Activated CD4-positive, alpha-beta memory T cell treated with anti-CD3 and anti-CD28 coated beads for 36 hours (primary cell): ENCODE measurements at regions of chr2 and their contacts with region 1.

Region 1: GRCh38 chr2:100554798-100555407 is 7.9 kb upstream of the PDCL3 start:
- DNase-seq: peak; percentile 75
- H3K4me3 Mint-ChIP-seq: peak overlapping the region; percentile 61
- H3K27ac Mint-ChIP-seq: peak overlapping the region; percentile 81
- H3K4me1 Mint-ChIP-seq: peaks cover 18% of the 10 kb centered on the region
- H3K27me3 Mint-ChIP-seq: no peaks in the 10 kb centered on the region

Region 2: DNA sequence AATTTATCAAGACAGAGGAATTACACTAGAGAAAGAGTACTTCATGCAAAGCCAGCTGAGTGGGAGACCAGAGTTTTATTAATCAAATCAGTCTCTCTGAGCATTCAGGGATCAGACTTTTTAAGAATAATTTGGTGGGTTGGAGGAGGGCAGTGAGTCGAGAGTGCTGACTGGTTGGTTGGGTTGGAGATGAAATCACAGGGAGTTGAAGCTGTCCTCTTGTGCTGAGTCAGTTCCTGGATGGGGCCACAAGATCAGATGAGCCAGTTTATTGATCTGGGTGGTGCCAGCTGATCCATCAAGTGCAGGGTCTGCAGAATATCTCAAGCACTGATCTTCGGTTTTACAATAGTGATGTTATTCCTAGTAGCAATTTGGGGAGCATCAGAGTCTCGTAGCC is 13.5 kb before region 1 on chr2:
- CTCF ChIA-PET with region 1: no interaction called
- POLR2A ChIA-PET with region 1: no interaction called
- intact Hi-C with region 1: no loop called
- DNase-seq: no peak
- H3K4me3 Mint-ChIP-seq: no peak overlapping the region
- H3K27ac Mint-ChIP-seq: no peak overlapping the region
- H3K4me1 Mint-ChIP-seq: peaks cover 7% of the 10 kb centered on the region
- H3K27me3 Mint-ChIP-seq: no peaks in the 10 kb centered on the region

Region 3: GRCh38 chr2:100580367-100581276 is 25.7 kb after region 1 on chr2:
- CTCF ChIA-PET with region 1: no interaction called
- POLR2A ChIA-PET with region 1: no interaction called
- intact Hi-C with region 1: loop called (anchors 2 kb)
- DNase-seq: peak; percentile 64
- H3K4me3 Mint-ChIP-seq: peak overlapping the region; percentile 71
- H3K27ac Mint-ChIP-seq: peak overlapping the region; percentile 96
- H3K4me1 Mint-ChIP-seq: peaks cover 38% of the 10 kb centered on the region
- H3K27me3 Mint-ChIP-seq: no peaks in the 10 kb centered on the region

Region 4: GRCh38 chr2:100655936-100656534 is 101.1 kb after region 1 on chr2:
- CTCF ChIA-PET with region 1: no interaction called
- POLR2A ChIA-PET with region 1: no interaction called
- intact Hi-C with region 1: no loop called
- DNase-seq: no peak
- H3K4me3 Mint-ChIP-seq: no peak overlapping the region
- H3K27ac Mint-ChIP-seq: no peak overlapping the region
- H3K4me1 Mint-ChIP-seq: peaks cover 8% of the 10 kb centered on the region
- H3K27me3 Mint-ChIP-seq: no peaks in the 10 kb centered on the region